ENCODE measurements at regions of chr1 and their contacts with region 1.

Region 1: GRCh38 chr1:121519042-121519755 is 334.4 kb downstream of the SRGAP2C start:
- DNase-seq: peak; percentile 71 to 93 (median 81)
- ATAC-seq: peak; percentile 86
- H3K4me3 ChIP-seq: peak overlapping the region; percentile 71
- H3K4me3 Mint-ChIP-seq: peak overlapping the region; percentile 97
- H3K27ac ChIP-seq: peak overlapping the region; percentile 71 to 81
- H3K27ac Mint-ChIP-seq: peak overlapping the region; percentile 83
- H3K4me1 ChIP-seq: peaks cover 26% of the 10 kb centered on the region
- H3K4me1 Mint-ChIP-seq: peaks cover 74% of the 10 kb centered on the region
- H3K27me3 ChIP-seq: no peaks in the 10 kb centered on the region
- H3K27me3 Mint-ChIP-seq: no peaks in the 10 kb centered on the region
- CTCF ChIP-seq: peak; percentile 27

Region 2: DNA sequence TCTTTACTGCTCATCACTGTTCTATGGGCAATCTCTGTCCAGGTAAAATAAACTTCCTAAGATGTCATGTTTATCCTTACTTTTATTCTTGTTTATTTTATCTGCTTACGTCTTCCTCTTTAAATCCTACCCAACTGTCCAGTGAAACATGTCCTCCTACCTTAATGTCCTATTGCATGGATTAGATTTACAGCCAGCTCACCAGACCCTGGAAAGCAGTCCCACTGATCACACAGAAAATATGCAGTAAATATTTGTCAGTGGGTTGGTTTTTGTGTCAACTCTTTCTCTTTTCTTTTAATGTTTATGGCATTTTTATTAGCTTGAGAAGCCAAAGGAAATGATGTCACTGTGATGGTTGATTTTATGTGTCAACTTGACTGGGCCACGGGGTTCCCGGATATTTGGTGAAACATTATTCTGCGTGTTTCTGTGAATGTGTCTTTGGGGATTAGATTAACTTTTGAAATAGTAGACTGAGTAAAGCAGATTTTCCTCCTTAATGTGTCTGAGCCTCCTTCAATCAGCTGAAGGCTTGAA is 76.1 kb before region 1 on chr1:
- CTCF ChIA-PET with region 1: no interaction called
- POLR2A ChIA-PET with region 1: interaction called, 6 read pairs
- intact Hi-C with region 1: loop called in 1 of 2 experiments (anchors 10 kb)
- DNase-seq: peak in 1 of 14 experiments; percentile 10
- ATAC-seq: no peak
- H3K4me3 ChIP-seq: no peak overlapping the region
- H3K4me3 Mint-ChIP-seq: no peak overlapping the region
- H3K27ac ChIP-seq: no peak overlapping the region
- H3K27ac Mint-ChIP-seq: no peak overlapping the region
- H3K4me1 ChIP-seq: no peaks in the 10 kb centered on the region
- H3K4me1 Mint-ChIP-seq: peaks cover 4% of the 10 kb centered on the region
- H3K27me3 ChIP-seq: no peaks in the 10 kb centered on the region
- H3K27me3 Mint-ChIP-seq: no peaks in the 10 kb centered on the region
- CTCF ChIP-seq: no peak

Region 3: DNA sequence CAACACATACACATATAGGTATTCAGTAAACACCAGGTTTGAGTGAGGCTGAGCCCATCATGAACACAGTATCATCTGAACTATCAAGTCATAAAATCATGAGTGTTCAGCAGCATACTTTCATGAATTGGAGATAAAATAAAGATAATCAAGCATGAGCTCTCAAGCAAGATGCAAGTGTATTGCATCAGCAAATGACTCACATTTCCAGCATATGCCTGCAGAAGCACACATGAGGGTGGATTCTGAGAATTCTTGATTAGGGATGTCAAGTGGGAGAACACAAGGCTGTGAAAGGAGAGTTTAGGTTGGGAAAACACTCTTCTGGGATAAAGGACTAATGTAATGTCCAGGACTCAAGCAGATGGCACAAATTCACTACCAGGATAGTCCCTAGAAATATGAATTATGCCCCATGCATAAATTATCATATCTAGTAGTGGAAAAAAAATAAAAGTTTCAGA is 35.2 kb before region 1 on chr1:
- CTCF ChIA-PET with region 1: no interaction called
- POLR2A ChIA-PET with region 1: no interaction called
- intact Hi-C with region 1: no loop called
- DNase-seq: no peak
- ATAC-seq: no peak
- H3K4me3 ChIP-seq: no peak overlapping the region
- H3K4me3 Mint-ChIP-seq: no peak overlapping the region
- H3K27ac ChIP-seq: no peak overlapping the region
- H3K27ac Mint-ChIP-seq: no peak overlapping the region
- H3K4me1 ChIP-seq: no peaks in the 10 kb centered on the region
- H3K4me1 Mint-ChIP-seq: no peaks in the 10 kb centered on the region
- H3K27me3 ChIP-seq: no peaks in the 10 kb centered on the region
- H3K27me3 Mint-ChIP-seq: no peaks in the 10 kb centered on the region
- CTCF ChIP-seq: no peak

Region 4: GRCh38 chr1:121546830-121547591 is 27.8 kb after region 1 on chr1:
- CTCF ChIA-PET with region 1: interaction called, 4 read pairs
- POLR2A ChIA-PET with region 1: interaction called, 38 read pairs
- intact Hi-C with region 1: loop called (anchors 2 to 5 kb)
- DNase-seq: peak in 3 of 14 experiments; percentile 5 to 28 (median 16)
- ATAC-seq: peak; percentile 40
- H3K4me3 ChIP-seq: no peak overlapping the region
- H3K4me3 Mint-ChIP-seq: no peak overlapping the region
- H3K27ac ChIP-seq: no peak overlapping the region
- H3K27ac Mint-ChIP-seq: peak overlapping the region; percentile 19
- H3K4me1 ChIP-seq: peaks cover 11% of the 10 kb centered on the region
- H3K4me1 Mint-ChIP-seq: peaks cover 61% of the 10 kb centered on the region
- H3K27me3 ChIP-seq: no peaks in the 10 kb centered on the region
- H3K27me3 Mint-ChIP-seq: no peaks in the 10 kb centered on the region
- CTCF ChIP-seq: no peak

Region 5: DNA sequence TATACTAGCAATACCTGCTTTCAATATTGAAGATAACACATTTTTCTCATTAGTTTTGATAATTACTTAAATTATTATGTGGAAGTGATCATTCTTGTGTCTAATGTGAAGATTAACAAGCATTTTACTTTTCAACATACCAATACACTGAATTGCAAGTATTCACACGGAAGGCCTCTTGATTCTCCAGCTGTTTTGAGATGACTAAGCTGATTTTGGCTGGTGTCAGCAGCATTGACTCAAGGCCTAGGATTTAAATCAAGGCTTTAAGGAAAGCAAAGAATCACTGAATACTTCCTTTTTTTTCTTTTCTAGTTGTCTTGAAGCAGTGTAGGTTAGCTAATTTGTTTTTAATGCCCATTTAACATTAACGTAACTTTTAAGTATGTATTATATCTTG is 39.3 kb after region 1 on chr1:
- CTCF ChIA-PET with region 1: interaction called, 4 read pairs
- POLR2A ChIA-PET with region 1: interaction called, 38 read pairs
- intact Hi-C with region 1: loop called in 1 of 2 experiments (anchors 5 kb)
- DNase-seq: no peak
- ATAC-seq: no peak
- H3K4me3 ChIP-seq: no peak overlapping the region
- H3K4me3 Mint-ChIP-seq: peak overlapping the region; percentile 50
- H3K27ac ChIP-seq: no peak overlapping the region
- H3K27ac Mint-ChIP-seq: peak overlapping the region; percentile 69
- H3K4me1 ChIP-seq: peaks cover 6% of the 10 kb centered on the region
- H3K4me1 Mint-ChIP-seq: peaks cover 44% of the 10 kb centered on the region
- H3K27me3 ChIP-seq: no peaks in the 10 kb centered on the region
- H3K27me3 Mint-ChIP-seq: no peaks in the 10 kb centered on the region
- CTCF ChIP-seq: no peak

Region 6: GRCh38 chr1:121595089-121595488 is 75.9 kb after region 1 on chr1:
- CTCF ChIA-PET with region 1: no interaction called
- POLR2A ChIA-PET with region 1: no interaction called
- intact Hi-C with region 1: loop called in 1 of 2 experiments (anchors 10 kb)
- DNase-seq: no peak
- ATAC-seq: no peak
- H3K4me3 ChIP-seq: no peak overlapping the region
- H3K4me3 Mint-ChIP-seq: no peak overlapping the region
- H3K27ac ChIP-seq: no peak overlapping the region
- H3K27ac Mint-ChIP-seq: no peak overlapping the region
- H3K4me1 ChIP-seq: no peaks in the 10 kb centered on the region
- H3K4me1 Mint-ChIP-seq: peaks cover 20% of the 10 kb centered on the region
- H3K27me3 ChIP-seq: no peaks in the 10 kb centered on the region
- H3K27me3 Mint-ChIP-seq: no peaks in the 10 kb centered on the region
- CTCF ChIP-seq: no peak

Measured in CD4-positive, alpha-beta T cell (primary cell).